WTC11 (cell line): ENCODE measurements at regions of chr5 and their contacts with region 1.

Region 1: DNA sequence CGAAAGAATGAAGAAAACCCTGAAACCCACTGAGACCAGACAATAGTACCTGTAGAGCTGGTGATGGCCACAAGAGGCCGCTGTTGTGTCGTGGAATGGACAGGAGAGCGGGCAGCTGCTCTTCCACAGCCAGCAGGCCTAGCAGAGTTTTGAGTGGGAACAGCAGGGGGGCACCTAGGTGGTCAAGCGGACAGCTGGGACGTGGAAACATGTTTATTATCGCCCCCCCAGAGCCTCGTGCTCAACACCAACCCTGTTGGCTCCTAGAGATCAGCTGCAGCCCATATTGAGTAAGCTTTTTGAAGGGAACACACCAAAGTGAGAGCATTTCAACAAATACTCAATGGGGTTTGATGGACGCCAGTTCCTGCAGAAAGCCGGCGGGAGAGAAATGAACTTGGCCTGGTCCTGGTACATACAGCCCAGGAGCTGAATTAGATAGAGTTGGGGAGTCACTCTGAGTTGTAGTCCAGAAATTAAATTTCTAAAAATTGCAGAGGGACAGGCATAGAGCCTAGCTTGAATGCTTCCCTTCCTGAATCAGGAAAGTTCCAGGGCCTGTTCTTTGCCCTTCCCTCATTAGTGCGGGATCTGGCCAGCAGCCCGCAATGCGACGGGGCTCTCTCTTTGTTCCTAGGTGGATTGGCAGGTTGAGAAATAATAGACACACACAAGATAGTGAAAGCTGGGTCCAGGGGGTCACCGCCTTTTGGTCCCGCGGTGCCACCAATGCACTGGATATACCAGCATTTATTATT is 33.8 kb downstream of the MFAP3 start:
- DNase-seq: peak; percentile 87
- ATAC-seq: peak; percentile 92
- H3K4me3 Mint-ChIP-seq: no peak overlapping the region
- H3K27ac Mint-ChIP-seq: no peak overlapping the region
- H3K4me1 Mint-ChIP-seq: peaks cover 10% of the 10 kb centered on the region
- H3K27me3 Mint-ChIP-seq: peaks cover 6% of the 10 kb centered on the region
- CTCF ChIP-seq: peak; percentile 92

Region 2: DNA sequence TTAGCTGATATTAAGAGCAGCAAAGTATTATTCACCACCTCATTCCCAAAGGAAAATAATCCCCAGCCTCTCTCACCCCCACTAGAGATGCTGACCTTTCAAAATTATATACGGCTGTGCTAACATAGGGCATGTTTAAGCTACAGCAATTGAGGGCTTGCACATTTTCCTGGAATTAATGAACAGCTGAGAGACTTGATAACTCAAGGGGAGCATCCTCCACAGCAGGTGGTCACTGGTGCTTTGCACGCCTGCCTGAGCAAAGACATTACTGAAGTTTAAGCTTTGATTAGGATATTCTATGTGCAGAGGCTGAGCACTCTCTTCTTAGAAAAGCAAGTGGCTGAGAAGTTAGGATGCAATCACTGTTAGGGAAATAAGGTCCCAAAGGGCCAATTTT is 264.8 kb before region 1 on chr5:
- CTCF ChIA-PET with region 1: no interaction called
- POLR2A ChIA-PET with region 1: no interaction called
- DNase-seq: no peak
- ATAC-seq: no peak
- H3K4me3 Mint-ChIP-seq: no peak overlapping the region
- H3K27ac Mint-ChIP-seq: no peak overlapping the region
- H3K4me1 Mint-ChIP-seq: no peaks in the 10 kb centered on the region
- H3K27me3 Mint-ChIP-seq: no peaks in the 10 kb centered on the region
- CTCF ChIP-seq: no peak

Region 3: DNA sequence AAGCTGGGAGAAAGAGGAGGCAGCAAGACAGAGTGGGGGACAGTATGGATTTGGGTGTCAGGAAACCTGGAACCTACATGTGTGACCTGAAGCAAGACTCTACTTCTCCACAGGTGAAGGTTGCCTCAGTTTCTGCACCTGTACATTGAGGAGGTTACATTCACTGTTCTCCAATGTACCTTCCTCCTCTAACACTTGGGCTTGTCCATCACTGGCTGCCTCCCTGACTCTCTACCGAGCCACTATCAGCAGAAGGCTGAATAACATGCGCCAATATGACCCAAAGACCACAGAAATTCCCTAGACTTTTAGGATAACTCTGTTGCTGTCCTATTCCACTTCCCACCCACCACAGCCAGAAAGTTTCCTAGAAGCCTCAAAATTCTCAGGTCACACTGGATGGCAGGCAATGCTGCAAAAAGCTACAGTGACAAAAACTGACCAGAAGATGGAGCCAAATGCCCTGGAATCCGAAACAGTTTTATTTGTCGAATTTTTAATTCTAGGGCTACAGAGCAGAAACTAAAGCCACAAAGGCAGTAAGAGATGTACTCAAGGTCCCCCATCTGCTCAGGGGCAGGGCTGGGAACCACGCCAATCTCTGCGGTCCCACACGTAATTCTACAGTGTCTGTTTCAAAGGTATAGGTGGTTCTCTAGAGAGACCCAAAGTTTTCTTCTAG is 98.3 kb before region 1 on chr5:
- CTCF ChIA-PET with region 1: interaction called, 16 read pairs
- POLR2A ChIA-PET with region 1: no interaction called
- DNase-seq: peak; percentile 20
- ATAC-seq: peak; percentile 84
- H3K4me3 Mint-ChIP-seq: no peak overlapping the region
- H3K27ac Mint-ChIP-seq: no peak overlapping the region
- H3K4me1 Mint-ChIP-seq: no peaks in the 10 kb centered on the region
- H3K27me3 Mint-ChIP-seq: no peaks in the 10 kb centered on the region; the same call in 1 of the 2 replicates
- CTCF ChIP-seq: peak; percentile 55

Region 4: GRCh38 chr5:154092356-154093141 is 20.0 kb after region 1 on chr5:
- CTCF ChIA-PET with region 1: interaction called, 11 read pairs
- POLR2A ChIA-PET with region 1: interaction called, 3 read pairs
- DNase-seq: no peak
- ATAC-seq: peak; percentile 57
- H3K4me3 Mint-ChIP-seq: no peak overlapping the region
- H3K27ac Mint-ChIP-seq: no peak overlapping the region
- H3K4me1 Mint-ChIP-seq: peaks cover 20% of the 10 kb centered on the region
- H3K27me3 Mint-ChIP-seq: no peaks in the 10 kb centered on the region; the same call in 1 of the 2 replicates
- CTCF ChIP-seq: no peak

Region 5: GRCh38 chr5:154179846-154180710 is 107.5 kb after region 1 on chr5:
- CTCF ChIA-PET with region 1: interaction called, 68 read pairs
- POLR2A ChIA-PET with region 1: no interaction called
- DNase-seq: peak; percentile 34
- ATAC-seq: peak; percentile 90
- H3K4me3 Mint-ChIP-seq: no peak overlapping the region
- H3K27ac Mint-ChIP-seq: no peak overlapping the region
- H3K4me1 Mint-ChIP-seq: peaks cover 17% of the 10 kb centered on the region
- H3K27me3 Mint-ChIP-seq: peaks cover 4% of the 10 kb centered on the region; the same call in 1 of the 2 replicates
- CTCF ChIP-seq: peak; percentile 55

Region 6: DNA sequence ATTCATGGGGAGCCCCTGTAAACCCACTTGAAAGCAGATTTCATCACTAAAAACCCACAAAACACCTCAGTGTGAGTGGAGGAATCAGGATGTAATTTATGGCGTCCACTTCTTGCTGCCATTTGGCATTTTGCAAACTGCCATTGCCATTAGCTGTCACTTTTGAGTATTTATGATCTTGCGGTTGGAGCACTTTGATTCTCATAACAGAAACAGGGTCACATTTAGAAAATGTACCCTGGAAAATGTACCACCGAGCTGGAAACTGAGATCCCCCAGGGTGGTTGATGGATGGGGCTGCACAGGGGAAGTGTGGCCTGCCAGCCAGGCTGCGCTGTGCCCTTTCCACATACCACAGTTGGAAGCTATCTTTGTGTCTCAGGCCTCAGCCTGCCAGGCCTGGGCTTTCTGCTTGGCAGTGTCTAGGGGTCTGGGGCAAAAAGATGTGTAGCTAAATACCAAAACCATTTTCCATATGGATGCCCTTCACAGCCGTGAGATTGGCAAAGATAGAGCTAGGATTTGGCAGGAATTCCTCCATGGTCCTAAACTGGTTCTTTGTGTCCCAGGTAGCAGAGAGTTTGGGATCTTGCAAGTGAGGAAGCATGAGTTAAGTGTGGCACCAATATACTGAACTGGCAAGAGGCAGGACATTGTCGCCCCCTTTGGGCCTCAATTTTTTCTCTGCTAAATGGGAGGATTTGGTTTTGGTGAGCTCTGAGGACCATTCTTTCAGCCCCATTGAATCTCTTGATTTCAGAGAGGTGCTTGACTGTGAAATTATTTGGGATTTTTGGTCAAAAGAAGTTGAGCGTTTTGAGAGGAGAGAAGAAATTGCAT is 164.2 kb after region 1 on chr5:
- CTCF ChIA-PET with region 1: interaction called, 12 read pairs
- POLR2A ChIA-PET with region 1: no interaction called
- DNase-seq: no peak
- ATAC-seq: peak; percentile 12; the same call in 1 of the 2 replicates
- H3K4me3 Mint-ChIP-seq: no peak overlapping the region
- H3K27ac Mint-ChIP-seq: no peak overlapping the region
- H3K4me1 Mint-ChIP-seq: peaks cover 37% of the 10 kb centered on the region
- H3K27me3 Mint-ChIP-seq: no peaks in the 10 kb centered on the region
- CTCF ChIP-seq: no peak

Region 7: GRCh38 chr5:154276973-154277331 is 204.4 kb after region 1 on chr5:
- CTCF ChIA-PET with region 1: no interaction called
- POLR2A ChIA-PET with region 1: no interaction called
- DNase-seq: no peak
- ATAC-seq: no peak
- H3K4me3 Mint-ChIP-seq: no peak overlapping the region
- H3K27ac Mint-ChIP-seq: no peak overlapping the region
- H3K4me1 Mint-ChIP-seq: no peaks in the 10 kb centered on the region; the same call in 1 of the 2 replicates
- H3K27me3 Mint-ChIP-seq: no peaks in the 10 kb centered on the region
- CTCF ChIP-seq: no peak

Region 8: GRCh38 chr5:154610321-154611154 is 537.9 kb after region 1 on chr5:
- CTCF ChIA-PET with region 1: interaction called, 15 read pairs
- POLR2A ChIA-PET with region 1: no interaction called
- DNase-seq: peak; percentile 94
- ATAC-seq: peak; percentile 87
- H3K4me3 Mint-ChIP-seq: peak overlapping the region; percentile 65
- H3K27ac Mint-ChIP-seq: no peak overlapping the region
- H3K4me1 Mint-ChIP-seq: peaks cover 29% of the 10 kb centered on the region
- H3K27me3 Mint-ChIP-seq: peaks cover 79% of the 10 kb centered on the region
- CTCF ChIP-seq: peak; percentile 91

Region 9: GRCh38 chr5:155004138-155004744 is 931.6 kb after region 1 on chr5:
- CTCF ChIA-PET with region 1: no interaction called
- POLR2A ChIA-PET with region 1: no interaction called
- DNase-seq: peak; percentile 69
- ATAC-seq: peak; percentile 96
- H3K4me3 Mint-ChIP-seq: no peak overlapping the region
- H3K27ac Mint-ChIP-seq: no peak overlapping the region
- H3K4me1 Mint-ChIP-seq: 0 out of 2 replicates have a peak, but pooled peaks cover 7% of the 10 kb centered on the region
- H3K27me3 Mint-ChIP-seq: no peaks in the 10 kb centered on the region; the same call in none of the 2 replicates
- CTCF ChIP-seq: no peak